ENCODE measurements at regions of chr7 and their contacts with region 1.

Region 1: GRCh38 chr7:20798081-20798693 is 11.5 kb upstream of the SP8 start:
- DNase-seq: peak; percentile 26
- H3K4me3 Mint-ChIP-seq: no peak overlapping the region
- H3K27ac Mint-ChIP-seq: no peak overlapping the region
- H3K4me1 Mint-ChIP-seq: peaks cover 17% of the 10 kb centered on the region
- H3K27me3 Mint-ChIP-seq: peaks cover 52% of the 10 kb centered on the region

Region 2: GRCh38 chr7:19117091-19117869 is 1680.9 kb before region 1 on chr7 and contains the start of gene TWIST1:
- CTCF ChIA-PET with region 1: no interaction called
- POLR2A ChIA-PET with region 1: no interaction called
- intact Hi-C with region 1: loop called (anchors 10 kb)
- DNase-seq: no peak
- H3K4me3 Mint-ChIP-seq: peak within 1 kb of the TSS; percentile 26
- H3K27ac Mint-ChIP-seq: no peak within 1 kb of the TSS
- H3K4me1 Mint-ChIP-seq: peaks cover 2% of the 10 kb centered on the region
- H3K27me3 Mint-ChIP-seq: peaks cover 39% of the 10 kb centered on the region
- total RNA-seq, gene TWIST1: 4.1 to 4.6 TPM

Region 3: GRCh38 chr7:20778063-20778721 is 20.0 kb before region 1 on chr7:
- CTCF ChIA-PET with region 1: no interaction called
- POLR2A ChIA-PET with region 1: no interaction called
- intact Hi-C with region 1: loop called (anchors 2 kb)
- DNase-seq: no peak
- H3K4me3 Mint-ChIP-seq: no peak overlapping the region
- H3K27ac Mint-ChIP-seq: no peak overlapping the region
- H3K4me1 Mint-ChIP-seq: peaks cover 11% of the 10 kb centered on the region
- H3K27me3 Mint-ChIP-seq: peaks cover 68% of the 10 kb centered on the region

Region 4: DNA sequence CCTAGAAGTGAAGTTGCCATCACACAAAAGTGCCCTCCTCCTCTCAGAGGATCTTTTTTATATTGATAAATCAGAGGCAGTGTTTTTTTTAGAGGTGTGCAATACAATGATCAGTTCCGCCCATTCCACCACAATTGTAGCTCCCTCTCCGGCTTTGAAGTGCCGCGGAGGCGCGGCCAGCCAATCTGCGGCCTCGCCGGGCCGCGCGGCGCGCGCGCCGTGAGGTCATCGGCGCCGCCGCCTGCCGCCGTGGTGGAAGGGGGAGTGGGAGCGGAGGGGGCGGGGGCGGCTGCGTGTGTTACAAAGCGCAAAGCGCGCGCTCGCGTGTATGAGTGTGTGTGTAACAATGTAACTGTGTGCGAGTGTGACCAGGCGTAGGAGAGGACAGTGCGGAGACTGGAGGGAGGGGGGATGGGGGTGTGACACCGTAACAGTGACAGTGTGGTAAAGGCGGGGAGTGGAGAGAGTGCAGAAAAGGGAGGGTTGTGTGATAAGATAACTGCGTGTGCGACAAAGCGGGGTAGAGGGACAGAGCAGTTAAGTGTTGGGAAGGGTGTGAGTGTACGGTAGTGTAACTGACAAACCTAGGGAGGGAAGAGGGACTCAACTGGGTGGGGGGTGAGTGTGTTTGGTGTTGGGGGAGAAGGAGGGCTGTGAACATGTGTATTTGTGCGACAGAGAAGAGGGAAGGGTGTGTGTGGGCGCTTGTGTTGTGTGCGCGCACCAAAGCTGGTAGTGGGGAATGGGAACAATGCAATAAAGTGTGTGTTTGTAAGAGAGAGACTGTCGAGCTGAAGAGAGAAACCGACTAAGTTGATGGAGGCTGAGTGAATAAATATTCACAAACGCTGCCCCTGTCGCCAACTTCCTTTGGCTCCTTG is 11.2 kb before region 1 on chr7 and contains the start of gene SP8:
- CTCF ChIA-PET with region 1: no interaction called
- POLR2A ChIA-PET with region 1: no interaction called
- intact Hi-C with region 1: loop called (anchors 1 kb)
- DNase-seq: peak; percentile 43
- H3K4me3 Mint-ChIP-seq: peak within 1 kb of the TSS; percentile 53
- H3K27ac Mint-ChIP-seq: peak within 1 kb of the TSS; percentile 40
- H3K4me1 Mint-ChIP-seq: peaks cover 26% of the 10 kb centered on the region
- H3K27me3 Mint-ChIP-seq: peaks cover 73% of the 10 kb centered on the region
- total RNA-seq, gene SP8: not detected

Region 5: GRCh38 chr7:21253740-21254687 is 455.8 kb after region 1 on chr7:
- CTCF ChIA-PET with region 1: no interaction called
- POLR2A ChIA-PET with region 1: no interaction called
- intact Hi-C with region 1: loop called (anchors 5 kb)
- DNase-seq: peak; percentile 56
- H3K4me3 Mint-ChIP-seq: no peak overlapping the region
- H3K27ac Mint-ChIP-seq: no peak overlapping the region
- H3K4me1 Mint-ChIP-seq: peaks cover 1% of the 10 kb centered on the region
- H3K27me3 Mint-ChIP-seq: peaks cover 51% of the 10 kb centered on the region

Region 6: DNA sequence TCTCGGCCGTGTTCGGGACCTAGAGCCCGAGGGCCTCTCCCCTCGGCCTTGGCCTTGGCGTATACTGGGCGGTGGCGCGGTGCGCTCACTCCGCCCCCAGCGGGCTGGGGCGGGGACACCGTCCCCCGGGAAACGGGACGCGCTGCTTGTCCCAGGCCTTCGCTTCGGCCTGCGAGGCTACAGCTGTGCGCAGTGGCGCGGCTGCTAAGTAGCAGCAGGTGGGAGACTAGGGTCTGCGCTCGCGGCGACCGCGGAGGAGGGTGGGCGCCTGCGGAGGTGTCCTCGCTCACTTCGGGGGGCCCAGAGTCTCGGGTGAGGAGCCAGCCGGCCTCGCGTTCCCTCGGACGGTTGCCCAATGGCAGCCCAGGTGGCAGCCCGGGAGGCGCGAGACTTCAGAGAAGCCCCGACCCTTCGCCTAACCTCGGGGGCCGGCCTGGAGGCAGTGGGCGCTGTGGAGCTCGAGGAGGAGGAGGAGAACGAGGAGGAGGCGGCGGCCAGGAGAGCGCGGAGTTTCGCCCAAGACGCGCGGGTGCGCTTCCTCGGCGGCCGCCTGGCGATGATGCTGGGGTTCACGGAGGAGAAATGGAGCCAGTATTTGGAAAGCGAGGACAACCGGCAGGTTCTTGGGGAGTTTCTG is 744.8 kb after region 1 on chr7 and contains the start of gene DNAH11:
- CTCF ChIA-PET with region 1: no interaction called
- POLR2A ChIA-PET with region 1: no interaction called
- intact Hi-C with region 1: loop called (anchors 5 kb)
- DNase-seq: peak; percentile 32
- H3K4me3 Mint-ChIP-seq: peak within 1 kb of the TSS; percentile 63
- H3K27ac Mint-ChIP-seq: no peak within 1 kb of the TSS
- H3K4me1 Mint-ChIP-seq: peaks cover 6% of the 10 kb centered on the region
- H3K27me3 Mint-ChIP-seq: peaks cover 59% of the 10 kb centered on the region
- total RNA-seq, gene DNAH11: 0.31 to 0.61 TPM

Measured in activated CD4-positive, alpha-beta memory T cell treated with anti-CD3 and anti-CD28 coated beads for 36 hours (primary cell).